A549 (cell line): ENCODE measurements at regions of chr2 and their contacts with region 1.

Region 1: DNA sequence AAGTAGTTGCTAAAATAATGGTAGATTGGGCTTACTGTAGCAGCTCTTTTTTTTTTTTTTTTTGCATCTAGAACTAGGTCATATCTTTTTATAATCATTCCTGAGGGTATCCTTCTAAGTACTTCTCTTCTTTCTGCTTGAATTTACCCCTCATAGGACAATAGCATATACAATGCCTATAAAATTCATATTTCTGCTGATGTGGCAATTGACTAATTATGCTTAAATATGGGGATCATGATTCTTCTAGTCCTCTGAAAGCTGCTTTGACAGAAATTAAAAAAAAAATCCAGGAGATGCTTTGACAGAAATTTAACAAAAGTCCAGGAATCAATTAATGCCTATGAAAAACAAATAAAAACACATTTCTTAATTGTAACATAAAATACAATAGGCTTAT is 358.4 kb downstream of the CCDC85A start:
- DNase-seq: no peak
- ATAC-seq: no peak
- H3K4me3 ChIP-seq: no peak overlapping the region
- H3K27ac ChIP-seq: no peak overlapping the region
- H3K4me1 ChIP-seq: no peaks in the 10 kb centered on the region
- CTCF ChIP-seq: no peak
- EP300 ChIP-seq: no peak
- POLR2A ChIP-seq: no peak
- RAD21 ChIP-seq: no peak

Region 2: GRCh38 chr2:56739413-56739812 is 197.2 kb after region 1 on chr2:
- CTCF ChIA-PET with region 1: no interaction called
- POLR2A ChIA-PET with region 1: interaction called, 10 read pairs
- DNase-seq: no peak
- ATAC-seq: no peak
- H3K4me3 ChIP-seq: no peak overlapping the region
- H3K27ac ChIP-seq: peak overlapping the region in 1 of 2 experiments; percentile 47; a peak in 2 of 6 replicates
- H3K4me1 ChIP-seq: peaks cover 31% of the 10 kb centered on the region
- CTCF ChIP-seq: no peak
- EP300 ChIP-seq: no peak
- POLR2A ChIP-seq: no peak
- RAD21 ChIP-seq: no peak

Region 3: DNA sequence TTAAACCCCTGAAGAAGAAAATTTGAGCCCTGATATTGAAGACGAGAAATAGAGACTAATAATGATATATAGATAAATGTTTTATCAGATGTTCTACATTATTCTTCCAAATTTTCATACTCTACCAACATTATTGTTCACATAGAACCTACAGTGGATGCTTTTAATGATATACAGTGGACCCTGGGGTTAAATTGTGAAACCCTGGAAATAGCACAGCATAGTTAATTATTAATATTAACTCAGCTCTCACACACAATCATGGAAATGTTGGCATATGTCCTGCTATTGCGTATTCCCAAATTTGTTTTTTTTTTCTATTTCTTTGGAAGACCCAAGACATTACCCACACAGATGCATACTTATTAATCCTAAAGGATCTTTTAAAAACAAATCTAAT is 221.5 kb after region 1 on chr2:
- CTCF ChIA-PET with region 1: no interaction called
- POLR2A ChIA-PET with region 1: no interaction called
- DNase-seq: no peak
- ATAC-seq: no peak
- H3K4me3 ChIP-seq: no peak overlapping the region
- H3K27ac ChIP-seq: no peak overlapping the region
- H3K4me1 ChIP-seq: no peaks in the 10 kb centered on the region
- CTCF ChIP-seq: no peak
- EP300 ChIP-seq: no peak
- POLR2A ChIP-seq: no peak
- RAD21 ChIP-seq: no peak